Natural killer cell (primary cell): ENCODE measurements at regions of chr11 and their contacts with region 1.

Region 1: GRCh38 chr11:73661035-73661628 is 14.8 kb downstream of the PLEKHB1 start:
- DNase-seq: peak; percentile 81 to 90
- ATAC-seq: peak; percentile 89 to 97 (median 97)
- H3K4me3 ChIP-seq: peak overlapping the region; percentile 4
- H3K4me3 Mint-ChIP-seq: peak overlapping the region; percentile 55
- H3K27ac ChIP-seq: no peak overlapping the region
- H3K27ac Mint-ChIP-seq: no peak overlapping the region
- H3K4me1 ChIP-seq: peaks cover 12% of the 10 kb centered on the region
- H3K4me1 Mint-ChIP-seq: peaks cover 0 to 7% of the 10 kb centered on the region in 2 donors
- H3K27me3 ChIP-seq: peaks cover 7% of the 10 kb centered on the region
- H3K27me3 Mint-ChIP-seq: no peaks in the 10 kb centered on the region
- CTCF ChIP-seq: peak; percentile 88

Region 2: GRCh38 chr11:73307323-73308002 is 353.7 kb before region 1 on chr11:
- intact Hi-C with region 1: loop called (anchors 2 kb)
- DNase-seq: peak; percentile 85 to 91
- ATAC-seq: peak; percentile 72 to 81 (median 74)
- H3K4me3 ChIP-seq: peak overlapping the region; percentile 59
- H3K4me3 Mint-ChIP-seq: peak overlapping the region; percentile 96
- H3K27ac ChIP-seq: no peak overlapping the region
- H3K27ac Mint-ChIP-seq: peak overlapping the region; percentile 36 to 57
- H3K4me1 ChIP-seq: peaks cover 25% of the 10 kb centered on the region
- H3K4me1 Mint-ChIP-seq: peaks cover 7 to 14% of the 10 kb centered on the region in 2 donors
- H3K27me3 ChIP-seq: peaks cover 12% of the 10 kb centered on the region
- H3K27me3 Mint-ChIP-seq: peaks cover 21 to 35% of the 10 kb centered on the region in 2 donors
- CTCF ChIP-seq: peak; percentile 59

Region 3: GRCh38 chr11:73598719-73599379 is 62.3 kb before region 1 on chr11:
- intact Hi-C with region 1: no loop called
- DNase-seq: no peak
- ATAC-seq: no peak
- H3K4me3 ChIP-seq: peak overlapping the region; percentile 93
- H3K4me3 Mint-ChIP-seq: peak overlapping the region; percentile 97
- H3K27ac ChIP-seq: peak overlapping the region; percentile 86
- H3K27ac Mint-ChIP-seq: peak overlapping the region; percentile 90
- H3K4me1 ChIP-seq: peaks cover 15% of the 10 kb centered on the region
- H3K4me1 Mint-ChIP-seq: peaks cover 33% of the 10 kb centered on the region in 2 donors
- H3K27me3 ChIP-seq: no peaks in the 10 kb centered on the region
- H3K27me3 Mint-ChIP-seq: no peaks in the 10 kb centered on the region
- CTCF ChIP-seq: no peak

Region 4: GRCh38 chr11:73625696-73626318 is 35.3 kb before region 1 on chr11:
- intact Hi-C with region 1: loop called (anchors 1 kb)
- DNase-seq: peak; percentile 45 to 85
- ATAC-seq: peak; percentile 79 to 91 (median 91)
- H3K4me3 ChIP-seq: no peak overlapping the region
- H3K4me3 Mint-ChIP-seq: no peak overlapping the region
- H3K27ac ChIP-seq: no peak overlapping the region
- H3K27ac Mint-ChIP-seq: no peak overlapping the region
- H3K4me1 ChIP-seq: peaks cover 5% of the 10 kb centered on the region
- H3K4me1 Mint-ChIP-seq: peaks cover 0 to 3% of the 10 kb centered on the region in 2 donors
- H3K27me3 ChIP-seq: peaks cover 2% of the 10 kb centered on the region
- H3K27me3 Mint-ChIP-seq: peaks cover 17 to 23% of the 10 kb centered on the region in 2 donors
- CTCF ChIP-seq: peak; percentile 92